CD8-positive, alpha-beta T cell (primary cell): ENCODE measurements at regions of chr6 and their contacts with region 1.

Region 1: GRCh38 chr6:142913511-142914047 is 31.4 kb downstream of the HIVEP2 start:
- DNase-seq: peak; percentile 39 to 92 (median 73)
- ATAC-seq: peak; percentile 90
- H3K4me3 ChIP-seq: peak overlapping the region; percentile 41 to 43
- H3K4me3 Mint-ChIP-seq: peak overlapping the region; percentile 82
- H3K27ac ChIP-seq: peak overlapping the region; percentile 78 to 95
- H3K27ac Mint-ChIP-seq: peak overlapping the region; percentile 99
- H3K4me1 ChIP-seq: peaks cover 74% of the 10 kb centered on the region
- H3K4me1 Mint-ChIP-seq: peaks cover 82% of the 10 kb centered on the region
- H3K27me3 ChIP-seq: no peaks in the 10 kb centered on the region
- H3K27me3 Mint-ChIP-seq: no peaks in the 10 kb centered on the region
- CTCF ChIP-seq: peak; percentile 50

Region 2: DNA sequence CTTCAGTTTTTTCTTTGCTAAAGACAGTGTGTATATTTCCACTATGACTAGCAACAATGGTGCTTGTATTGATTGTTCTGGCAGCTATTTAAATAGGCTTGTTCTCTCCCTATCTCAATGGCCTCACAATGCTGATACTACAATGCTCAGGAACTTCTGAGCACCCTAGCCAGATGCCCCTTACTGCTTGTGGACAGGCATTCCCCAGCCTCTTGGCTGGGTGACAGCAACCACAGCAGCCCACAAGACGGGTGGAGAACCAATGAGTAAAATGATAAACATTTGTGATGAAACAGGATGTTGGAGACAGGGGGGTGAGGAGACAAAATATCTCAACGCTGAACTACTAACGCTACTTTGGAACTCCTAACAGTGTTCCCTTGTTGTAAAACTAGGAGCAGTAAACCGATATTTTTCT is 10.9 kb before region 1 on chr6:
- CTCF ChIA-PET with region 1: interaction called, 4 read pairs
- POLR2A ChIA-PET with region 1: interaction called, 5 read pairs
- intact Hi-C with region 1: loop called in 1 of 2 experiments (anchors 1 kb)
- DNase-seq: peak; percentile 53 to 95 (median 81)
- ATAC-seq: peak; percentile 58
- H3K4me3 ChIP-seq: peak overlapping the region; percentile 1 to 33
- H3K4me3 Mint-ChIP-seq: peak overlapping the region; percentile 70
- H3K27ac ChIP-seq: peak overlapping the region; percentile 82 to 87
- H3K27ac Mint-ChIP-seq: peak overlapping the region; percentile 98
- H3K4me1 ChIP-seq: peaks cover 91% of the 10 kb centered on the region
- H3K4me1 Mint-ChIP-seq: peaks cover 63% of the 10 kb centered on the region
- H3K27me3 ChIP-seq: no peaks in the 10 kb centered on the region
- H3K27me3 Mint-ChIP-seq: no peaks in the 10 kb centered on the region
- CTCF ChIP-seq: no peak